PC-9 (cell line): ENCODE measurements at regions of chr18 and their contacts with region 1.

Region 1: DNA sequence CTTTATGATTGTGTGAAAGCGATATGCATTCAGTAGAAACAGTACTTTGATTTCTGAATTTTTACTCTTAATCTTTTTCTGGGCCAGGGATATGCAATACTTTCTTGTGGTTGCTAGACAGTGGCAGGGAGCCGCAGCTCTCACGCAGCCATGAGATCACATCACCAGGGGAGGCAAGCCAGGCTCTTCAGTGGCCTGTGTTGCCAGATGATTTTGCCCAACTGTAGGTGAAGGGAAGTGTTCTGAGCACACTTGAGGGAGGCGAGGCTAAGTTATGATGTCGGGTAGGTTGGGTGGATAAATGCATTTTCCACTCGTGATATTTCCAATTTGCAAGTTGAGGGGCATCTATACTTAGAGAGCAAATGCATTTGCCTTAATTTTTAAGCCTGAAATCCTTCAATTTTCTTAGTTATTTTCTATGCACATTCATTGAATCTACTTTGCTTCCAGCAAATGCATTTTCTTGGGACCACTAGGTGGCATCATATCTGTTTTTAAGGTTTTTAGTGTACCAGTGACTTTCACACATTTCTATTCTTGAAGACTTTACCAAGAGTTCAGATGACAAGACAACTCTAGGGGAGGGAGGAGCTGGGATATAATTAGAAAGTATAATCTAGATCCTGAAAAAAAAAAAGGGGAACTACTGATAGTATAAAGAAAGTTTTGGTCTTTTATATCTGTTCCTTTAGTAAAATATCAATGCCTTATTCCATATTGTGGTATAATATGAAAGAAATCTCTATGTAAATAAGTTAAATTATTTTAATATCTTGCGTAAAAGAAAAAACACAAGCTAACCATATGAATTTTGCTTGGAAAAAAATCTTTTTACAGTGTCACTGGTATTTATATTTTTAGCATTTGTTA is 643.3 kb downstream of the SOCS6 start:
- DNase-seq: no peak
- H3K4me3 ChIP-seq: no peak overlapping the region
- H3K27ac ChIP-seq: no peak overlapping the region
- H3K4me1 ChIP-seq: no peaks in the 10 kb centered on the region
- H3K27me3 ChIP-seq: no peaks in the 10 kb centered on the region
- CTCF ChIP-seq: peak; percentile 77

Region 2: GRCh38 chr18:70293166-70293565 is 639.0 kb before region 1 on chr18:
- CTCF ChIA-PET with region 1: no interaction called
- POLR2A ChIA-PET with region 1: no interaction called
- intact Hi-C with region 1: no loop called
- DNase-seq: no peak
- H3K4me3 ChIP-seq: no peak overlapping the region
- H3K27ac ChIP-seq: 0 out of 2 replicates have a peak overlapping the region, but pooled peaks have one; percentile 4
- H3K4me1 ChIP-seq: peaks cover 57% of the 10 kb centered on the region
- H3K27me3 ChIP-seq: no peaks in the 10 kb centered on the region
- CTCF ChIP-seq: no peak

Region 3: DNA sequence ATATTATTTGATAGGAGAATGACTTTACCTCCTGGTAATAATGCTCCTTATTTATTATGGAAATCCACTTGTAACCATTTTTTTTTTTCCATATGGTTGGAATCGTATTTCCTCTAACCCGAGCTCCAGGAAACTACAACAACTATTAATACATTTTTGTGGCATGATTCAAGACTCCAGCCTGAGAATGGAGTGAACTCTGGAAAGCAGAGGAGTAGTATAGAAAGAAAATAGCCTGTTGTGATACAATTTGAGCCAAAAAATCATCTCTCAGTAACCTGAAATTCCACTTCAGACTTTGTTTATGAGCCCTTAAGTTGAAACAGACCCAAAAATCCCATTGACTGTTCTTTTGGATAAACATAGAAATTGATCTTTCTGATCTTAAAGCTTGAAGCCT is 277.8 kb after region 1 on chr18:
- CTCF ChIA-PET with region 1: no interaction called
- POLR2A ChIA-PET with region 1: interaction called, 12 read pairs
- intact Hi-C with region 1: no loop called
- DNase-seq: no peak
- H3K4me3 ChIP-seq: no peak overlapping the region
- H3K27ac ChIP-seq: no peak overlapping the region
- H3K4me1 ChIP-seq: no peaks in the 10 kb centered on the region
- H3K27me3 ChIP-seq: no peaks in the 10 kb centered on the region
- CTCF ChIP-seq: no peak

Region 4: GRCh38 chr18:72107647-72108383 is 1175.6 kb after region 1 on chr18:
- CTCF ChIA-PET with region 1: no interaction called
- POLR2A ChIA-PET with region 1: no interaction called
- intact Hi-C with region 1: loop called (anchors 10 kb)
- DNase-seq: no peak
- H3K4me3 ChIP-seq: no peak overlapping the region
- H3K27ac ChIP-seq: no peak overlapping the region
- H3K4me1 ChIP-seq: no peaks in the 10 kb centered on the region
- H3K27me3 ChIP-seq: no peaks in the 10 kb centered on the region
- CTCF ChIP-seq: no peak

Region 5: GRCh38 chr18:72544092-72544886 is 1612.1 kb after region 1 on chr18 and contains the start of gene CBLN2:
- CTCF ChIA-PET with region 1: no interaction called
- POLR2A ChIA-PET with region 1: no interaction called
- intact Hi-C with region 1: loop called (anchors 10 kb)
- DNase-seq: peak in 1 of 2 experiments; percentile 64
- H3K4me3 ChIP-seq: no peak within 1 kb of the TSS
- H3K27ac ChIP-seq: no peak within 1 kb of the TSS
- H3K4me1 ChIP-seq: no peaks in the 10 kb centered on the region
- H3K27me3 ChIP-seq: no peaks in the 10 kb centered on the region
- CTCF ChIP-seq: peak; percentile 65
- total RNA-seq, gene CBLN2: not detected in 2 replicates

Region 6: GRCh38 chr18:72672364-72673184 is 1740.4 kb after region 1 on chr18:
- CTCF ChIA-PET with region 1: no interaction called
- POLR2A ChIA-PET with region 1: no interaction called
- intact Hi-C with region 1: loop called (anchors 5 kb)
- DNase-seq: no peak
- H3K4me3 ChIP-seq: no peak overlapping the region
- H3K27ac ChIP-seq: no peak overlapping the region
- H3K4me1 ChIP-seq: no peaks in the 10 kb centered on the region
- H3K27me3 ChIP-seq: peaks cover 19% of the 10 kb centered on the region
- CTCF ChIP-seq: peak; percentile 91